GM12878 (cell line): ENCODE measurements at regions of chr16 and their contacts with region 1.

Region 1: DNA sequence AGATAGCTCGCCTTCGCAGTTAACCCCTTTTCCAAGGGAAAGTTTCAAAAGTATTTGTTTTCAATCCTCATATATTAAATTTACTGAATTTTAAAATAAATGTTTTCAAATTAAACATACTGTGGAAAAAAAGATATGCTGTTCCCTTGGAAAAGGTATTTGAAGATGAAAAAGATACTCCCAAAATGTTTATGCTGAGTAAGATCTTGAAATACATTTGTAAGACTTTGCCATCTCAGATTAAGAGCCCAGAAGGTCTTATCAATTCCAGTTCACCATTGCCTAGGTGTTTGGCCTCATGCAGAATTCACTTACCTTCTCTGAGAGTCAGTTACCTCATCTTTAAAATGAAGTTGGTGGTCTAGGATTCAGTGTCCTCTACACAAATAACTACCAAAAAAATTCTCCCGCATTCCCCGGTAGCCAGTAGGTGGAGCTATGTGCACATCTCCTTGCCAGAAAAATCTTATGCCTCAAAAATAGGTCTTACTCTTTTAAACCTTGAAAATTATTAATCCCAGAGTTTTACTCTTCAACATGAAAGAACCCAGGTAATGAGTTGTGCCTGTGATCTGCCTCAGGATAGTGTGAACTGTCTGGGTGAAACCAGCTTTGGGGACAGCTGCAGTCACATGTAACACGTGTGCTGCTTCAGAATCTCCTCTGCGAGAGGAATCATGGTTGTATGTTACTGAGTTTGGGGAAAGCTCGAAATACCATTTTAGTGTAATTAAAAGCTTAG is 178.3 kb downstream of the MRTFB start:
- DNase-seq: peak; percentile 13
- ATAC-seq: peak; percentile 57; the same call in 2 of the 3 replicates
- H3K4me3 ChIP-seq: no peak overlapping the region
- H3K27ac ChIP-seq: no peak overlapping the region
- H3K4me1 ChIP-seq: no peaks in the 10 kb centered on the region
- H3K27me3 ChIP-seq: no peaks in the 10 kb centered on the region
- CTCF ChIP-seq: peak; percentile 85 to 91 (median 88)
- EP300 ChIP-seq: no peak
- POLR2A ChIP-seq: no peak
- RAD21 ChIP-seq: peak; percentile 88

Region 2: DNA sequence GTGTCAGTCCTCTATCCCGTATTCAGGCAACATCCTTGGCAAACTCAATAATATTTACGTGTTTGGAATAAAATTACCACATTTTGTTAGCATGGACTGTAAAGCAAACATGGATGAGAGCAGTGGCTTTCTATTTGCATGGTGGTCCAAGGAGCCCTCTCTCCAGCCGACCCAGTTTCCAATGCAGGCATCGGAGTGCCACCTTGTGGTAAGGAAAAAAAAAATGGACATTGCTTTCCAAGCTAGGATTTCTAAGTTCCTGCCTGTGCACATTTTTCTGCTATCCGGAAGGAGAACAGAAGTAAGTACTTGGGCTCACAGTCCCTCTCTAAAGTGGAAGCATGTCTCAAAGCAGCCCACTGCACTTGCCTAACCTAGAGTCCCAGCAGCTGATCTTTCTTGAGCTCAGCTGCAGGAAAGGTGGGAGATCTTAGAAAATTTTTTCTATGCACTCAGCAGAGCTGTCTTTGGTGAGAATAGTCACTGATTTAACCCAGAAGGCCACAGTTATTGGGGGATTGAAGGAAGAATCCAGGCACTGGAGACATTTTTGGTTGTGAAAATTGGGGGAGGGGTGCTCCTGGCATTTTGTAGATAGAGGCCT is 375.5 kb before region 1 on chr16:
- CTCF ChIA-PET with region 1: no interaction called
- POLR2A ChIA-PET with region 1: no interaction called
- RAD21 ChIA-PET with region 1: no interaction called
- SMC1A ChIA-PET with region 1: no interaction called
- in situ Hi-C with region 1: no loop called
- intact Hi-C with region 1: no loop called
- DNase-seq: no peak
- ATAC-seq: no peak
- H3K4me3 ChIP-seq: no peak overlapping the region
- H3K27ac ChIP-seq: no peak overlapping the region
- H3K4me1 ChIP-seq: no peaks in the 10 kb centered on the region
- H3K27me3 ChIP-seq: 0 out of 4 replicates have a peak, but pooled peaks cover 0 to 2% of the 10 kb centered on the region in 2 experiments
- CTCF ChIP-seq: peak; percentile 27 to 46 (median 32); a peak in 4 of 6 replicates
- EP300 ChIP-seq: no peak
- POLR2A ChIP-seq: no peak
- RAD21 ChIP-seq: peak; percentile 58

Region 3: GRCh38 chr16:14263011-14263410 is 13.5 kb after region 1 on chr16:
- CTCF ChIA-PET with region 1: interaction called, 10 read pairs
- POLR2A ChIA-PET with region 1: no interaction called
- RAD21 ChIA-PET with region 1: no interaction called
- SMC1A ChIA-PET with region 1: interaction called, 5 read pairs
- in situ Hi-C with region 1: no loop called
- intact Hi-C with region 1: no loop called
- DNase-seq: no peak
- ATAC-seq: no peak
- H3K4me3 ChIP-seq: no peak overlapping the region
- H3K27ac ChIP-seq: no peak overlapping the region
- H3K4me1 ChIP-seq: no peaks in the 10 kb centered on the region
- H3K27me3 ChIP-seq: no peaks in the 10 kb centered on the region
- CTCF ChIP-seq: no peak
- EP300 ChIP-seq: no peak
- POLR2A ChIP-seq: no peak
- RAD21 ChIP-seq: no peak

Region 4: DNA sequence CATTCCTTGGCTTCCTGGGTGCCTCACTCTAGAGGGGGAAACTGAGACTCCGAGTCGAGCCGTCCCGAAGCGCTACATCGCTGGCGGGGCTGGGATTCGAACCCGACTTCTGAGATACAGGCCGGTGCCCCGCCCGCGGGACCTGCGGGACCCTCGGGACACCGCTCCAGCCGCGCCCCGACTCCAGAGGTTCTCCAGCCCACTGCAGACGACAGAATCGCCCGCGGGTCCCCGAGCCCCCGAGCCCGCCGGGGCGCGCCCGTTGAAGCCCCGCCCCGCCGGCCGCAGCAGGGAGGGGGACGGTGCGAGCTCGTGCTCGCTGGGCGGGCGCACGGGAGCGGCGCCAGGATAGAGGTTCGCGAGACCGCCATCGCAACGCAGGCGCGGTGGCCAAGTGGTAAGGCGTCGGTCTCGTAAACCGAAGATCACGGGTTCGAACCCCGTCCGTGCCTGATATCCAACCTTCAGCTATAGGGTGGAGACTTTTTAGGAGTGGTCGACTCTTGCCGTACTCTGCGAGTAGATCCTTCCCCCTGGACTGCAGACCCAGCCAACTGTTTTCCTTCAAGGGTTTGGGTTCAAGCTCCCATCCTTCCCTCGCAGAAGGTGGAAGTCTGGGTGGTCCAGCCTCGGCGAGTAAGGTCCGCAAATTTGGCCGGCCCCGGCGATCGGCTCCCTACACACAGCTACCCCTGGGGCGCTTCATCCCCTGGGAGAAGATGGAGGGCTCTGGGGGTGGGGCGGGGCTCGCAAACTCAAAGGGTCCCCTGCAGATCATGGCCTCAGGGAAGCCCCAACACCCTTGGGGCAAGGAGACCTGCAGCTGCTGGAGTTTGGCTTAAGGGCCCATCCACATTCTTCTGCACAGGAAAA is 36.3 kb after region 1 on chr16:
- CTCF ChIA-PET with region 1: interaction called, 22 read pairs
- POLR2A ChIA-PET with region 1: no interaction called
- RAD21 ChIA-PET with region 1: interaction called, 3 read pairs
- SMC1A ChIA-PET with region 1: interaction called, 7 read pairs
- in situ Hi-C with region 1: no loop called
- intact Hi-C with region 1: loop called (anchors 2 kb)
- DNase-seq: peak; percentile 87
- ATAC-seq: peak; percentile 89
- H3K4me3 ChIP-seq: peak overlapping the region; percentile 89
- H3K27ac ChIP-seq: peak overlapping the region; percentile 76
- H3K4me1 ChIP-seq: peaks cover 8% of the 10 kb centered on the region
- H3K27me3 ChIP-seq: no peaks in the 10 kb centered on the region
- CTCF ChIP-seq: no peak
- EP300 ChIP-seq: peak; percentile 10 to 49; a peak in 1 of 4 replicates
- POLR2A ChIP-seq: no peak
- RAD21 ChIP-seq: no peak